MCF 10A (cell line): ENCODE measurements at regions of chr16 and their contacts with region 1.

Region 1: DNA sequence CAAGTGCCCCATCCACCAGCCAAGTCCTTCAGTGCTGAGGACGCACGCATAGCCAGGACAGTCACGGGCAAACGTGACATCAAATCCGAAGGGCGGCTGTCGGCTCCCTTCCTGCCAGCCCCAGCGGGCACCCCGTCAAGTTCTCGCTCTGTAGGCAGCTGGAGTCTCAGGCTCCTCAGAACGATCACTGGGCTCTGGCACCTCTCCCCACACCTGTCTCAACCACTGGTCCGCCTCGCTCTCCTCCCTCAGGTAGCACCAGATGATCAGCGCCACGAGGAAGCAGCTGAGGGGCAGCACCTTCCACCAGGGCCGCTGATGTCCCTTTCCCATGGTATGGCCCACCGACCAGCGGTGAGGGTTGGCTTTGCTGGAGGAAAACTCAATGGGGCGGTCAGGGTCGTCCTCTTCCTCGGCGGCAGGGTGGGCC is 421 bp downstream of the UQCC4 start:
- DNase-seq: no peak
- H3K4me3 Mint-ChIP-seq: peak overlapping the region; percentile 86
- H3K27ac Mint-ChIP-seq: peak overlapping the region; percentile 95
- H3K4me1 Mint-ChIP-seq: no peaks in the 10 kb centered on the region
- H3K27me3 Mint-ChIP-seq: no peaks in the 10 kb centered on the region
- CTCF ChIP-seq: no peak

Region 2: DNA sequence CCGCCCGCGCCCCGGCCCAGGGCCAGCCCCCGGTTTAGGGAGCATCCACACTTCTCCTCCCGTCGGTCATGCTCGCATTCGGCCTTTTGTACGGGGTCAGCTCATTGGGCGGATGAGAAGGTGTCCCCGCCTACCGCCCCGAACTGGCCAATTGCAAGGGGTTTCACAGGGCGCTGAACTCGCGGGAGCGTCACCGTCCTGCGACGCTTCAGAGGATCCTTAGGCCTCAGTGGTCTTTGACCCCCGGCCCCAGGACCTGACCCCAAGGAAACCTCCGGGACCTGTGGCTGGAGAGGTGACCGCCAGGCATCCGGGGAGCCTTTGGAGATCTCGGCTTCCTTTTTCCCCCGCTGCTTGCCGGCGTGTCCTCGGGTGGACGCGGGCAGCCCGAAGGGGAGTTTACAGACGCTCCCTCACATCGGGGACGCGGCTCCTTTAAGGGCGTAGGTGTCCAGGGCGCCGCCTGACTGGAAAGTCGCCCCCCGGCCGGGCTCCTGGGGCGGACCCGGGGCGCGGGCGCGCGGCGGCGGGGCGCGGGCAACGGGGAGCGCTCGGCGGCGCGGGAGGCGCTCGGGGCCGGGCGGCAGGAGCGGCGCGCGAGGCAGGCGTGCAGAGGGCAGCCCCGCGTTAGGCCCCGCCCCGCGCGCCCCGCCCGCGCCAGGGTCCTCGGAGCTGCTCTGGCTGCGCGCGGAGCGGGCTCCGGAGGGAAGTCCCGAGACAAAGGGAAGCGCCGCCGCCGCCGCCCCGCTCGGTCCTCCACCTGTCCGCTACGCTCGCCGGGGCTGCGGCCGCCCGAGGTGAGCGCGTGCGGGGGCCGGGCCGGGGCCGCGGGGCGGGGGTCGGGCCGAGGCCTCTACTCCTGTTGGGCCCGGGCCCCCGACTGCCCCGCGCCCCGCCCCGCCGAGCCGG is 110.9 kb before region 1 on chr16 and contains the start of gene UBE2I:
- CTCF ChIA-PET with region 1: no interaction called
- POLR2A ChIA-PET with region 1: interaction called, 13 read pairs
- intact Hi-C with region 1: loop called (anchors 10 kb)
- DNase-seq: peak; percentile 97
- H3K4me3 Mint-ChIP-seq: peak within 1 kb of the TSS; percentile 96
- H3K27ac Mint-ChIP-seq: peak within 1 kb of the TSS; percentile 100
- H3K4me1 Mint-ChIP-seq: peaks cover 13% of the 10 kb centered on the region
- H3K27me3 Mint-ChIP-seq: no peaks in the 10 kb centered on the region
- CTCF ChIP-seq: no peak
- total RNA-seq, gene UBE2I: 163 and 172 TPM in 2 replicates

Region 3: DNA sequence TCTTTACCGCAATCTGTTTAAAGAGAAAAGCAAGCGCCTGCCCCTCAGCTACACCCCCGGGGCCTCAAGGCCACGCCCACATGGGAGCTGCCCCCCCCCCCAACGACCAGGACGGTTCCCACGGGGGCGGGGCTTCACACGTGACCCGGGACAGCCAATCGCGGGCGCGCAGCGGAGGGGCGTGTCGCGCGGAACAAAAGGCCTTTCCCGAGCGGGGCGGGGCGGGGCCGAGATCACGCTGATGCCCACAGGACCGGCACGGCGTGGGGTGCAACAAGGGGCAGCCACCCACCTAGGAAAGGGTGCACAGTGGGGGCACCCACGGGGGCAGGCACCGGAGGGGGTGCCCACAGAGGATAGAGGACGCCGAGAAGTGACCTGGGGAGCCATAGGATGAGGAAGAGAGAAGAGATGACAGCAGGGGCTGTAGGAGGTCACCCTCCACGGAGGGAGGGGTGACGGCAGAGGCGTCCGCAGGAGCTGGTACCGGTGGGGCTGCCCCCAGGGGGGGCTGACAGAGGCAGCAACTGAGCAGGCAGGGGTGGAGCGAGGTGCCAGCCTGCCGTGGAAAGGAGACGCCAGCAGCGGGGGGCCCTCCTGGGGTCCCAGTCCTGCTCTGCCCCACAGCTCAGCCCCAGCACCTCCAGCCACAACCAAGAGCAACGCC is 11.8 kb before region 1 on chr16:
- CTCF ChIA-PET with region 1: no interaction called
- POLR2A ChIA-PET with region 1: interaction called, 12 read pairs
- intact Hi-C with region 1: no loop called
- DNase-seq: peak; percentile 87
- H3K4me3 Mint-ChIP-seq: peak overlapping the region; percentile 78
- H3K27ac Mint-ChIP-seq: no peak overlapping the region
- H3K4me1 Mint-ChIP-seq: peaks cover 8% of the 10 kb centered on the region
- H3K27me3 Mint-ChIP-seq: no peaks in the 10 kb centered on the region
- CTCF ChIP-seq: no peak

Region 4: DNA sequence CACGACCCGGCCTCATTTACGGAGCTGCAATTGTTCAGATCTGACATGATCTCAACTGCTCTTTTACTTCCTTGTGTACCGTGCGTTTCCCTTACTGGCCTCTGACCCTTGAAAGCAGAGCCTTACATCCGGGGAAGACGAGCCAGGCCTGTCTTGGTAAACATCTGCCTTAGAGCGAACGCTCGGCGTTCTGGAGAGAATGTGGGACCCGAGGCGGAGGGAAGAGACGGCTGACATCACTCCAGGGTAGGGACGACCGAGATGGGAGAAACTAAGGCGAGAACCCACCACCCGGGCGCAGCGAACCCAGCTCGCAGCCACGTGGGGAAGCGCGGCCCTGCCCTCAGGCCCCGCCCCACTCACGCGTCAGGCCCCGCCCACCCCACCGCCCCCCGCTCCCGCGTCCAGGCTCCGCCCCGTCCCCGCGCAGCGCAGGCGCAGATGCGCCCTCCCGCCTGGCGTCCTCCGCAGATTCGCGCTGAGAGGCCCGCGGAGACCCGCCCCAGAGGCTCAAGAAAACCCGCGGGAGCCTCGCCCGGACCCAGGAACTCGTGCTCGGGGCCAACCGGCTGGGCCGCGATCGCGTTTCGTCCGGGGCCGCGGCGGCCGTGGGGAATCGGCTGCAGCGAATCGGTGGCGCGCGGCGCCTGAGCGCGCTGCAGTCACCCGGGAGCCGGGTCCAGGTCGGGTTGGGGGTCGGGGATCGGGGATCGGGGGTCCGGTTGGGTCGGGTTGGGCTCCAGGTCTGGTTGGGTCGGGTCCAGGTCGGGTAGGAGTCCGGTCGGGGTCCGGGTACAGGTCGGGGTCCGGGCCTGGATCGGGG is 73.0 kb after region 1 on chr16 and contains the start of gene TELO2:
- CTCF ChIA-PET with region 1: interaction called, 5 read pairs
- POLR2A ChIA-PET with region 1: interaction called, 10 read pairs
- intact Hi-C with region 1: no loop called
- DNase-seq: peak; percentile 72
- H3K4me3 Mint-ChIP-seq: peak within 1 kb of the TSS; percentile 78
- H3K27ac Mint-ChIP-seq: peak within 1 kb of the TSS; percentile 90
- H3K4me1 Mint-ChIP-seq: no peaks in the 10 kb centered on the region
- H3K27me3 Mint-ChIP-seq: no peaks in the 10 kb centered on the region
- CTCF ChIP-seq: no peak
- total RNA-seq, gene TELO2: 27.7 and 31.3 TPM in 2 replicates

Region 5: DNA sequence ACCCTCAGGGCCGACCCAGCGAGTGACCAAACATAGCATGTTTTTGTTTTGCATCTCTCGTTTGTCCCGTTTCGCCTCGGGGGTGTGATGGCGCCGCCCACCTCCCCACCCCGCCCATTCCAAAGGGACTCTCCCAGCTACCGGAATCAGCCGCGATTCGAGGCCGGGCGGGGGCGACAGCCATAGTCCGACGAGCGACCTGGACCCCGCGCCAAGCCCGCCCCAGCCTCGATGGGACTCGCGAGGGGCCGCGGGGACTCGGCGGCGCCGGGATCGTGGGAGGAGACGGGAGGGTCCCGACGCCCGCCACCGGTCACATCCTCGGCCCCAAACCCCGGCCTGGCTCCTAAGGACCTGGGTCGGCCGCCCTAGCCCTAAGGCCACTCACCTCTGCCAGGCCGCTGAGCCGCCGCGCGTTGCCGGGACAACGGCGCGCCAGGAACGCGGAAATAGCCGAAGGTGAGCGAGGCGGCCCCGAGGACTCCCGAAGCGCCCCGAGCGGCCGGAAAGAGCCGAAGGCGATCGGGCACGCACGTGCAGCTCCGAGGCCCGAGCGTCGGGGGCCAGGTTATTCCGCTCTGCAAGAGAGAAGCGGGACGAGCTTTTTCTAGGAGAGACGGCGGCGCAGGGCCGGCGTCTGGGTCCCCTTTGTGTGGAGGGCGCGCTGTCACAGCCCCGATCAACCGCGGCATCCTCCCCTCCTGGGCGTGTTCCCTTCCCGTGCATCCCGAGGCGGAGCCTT is 190.3 kb after region 1 on chr16:
- CTCF ChIA-PET with region 1: no interaction called
- POLR2A ChIA-PET with region 1: interaction called, 15 read pairs
- intact Hi-C with region 1: no loop called
- DNase-seq: peak; percentile 89
- H3K4me3 Mint-ChIP-seq: peak overlapping the region; percentile 85
- H3K27ac Mint-ChIP-seq: peak overlapping the region; percentile 97
- H3K4me1 Mint-ChIP-seq: peaks cover 11% of the 10 kb centered on the region
- H3K27me3 Mint-ChIP-seq: no peaks in the 10 kb centered on the region
- CTCF ChIP-seq: no peak